ENCODE measurements at regions of chr1 and their contacts with region 1.

Region 1: DNA sequence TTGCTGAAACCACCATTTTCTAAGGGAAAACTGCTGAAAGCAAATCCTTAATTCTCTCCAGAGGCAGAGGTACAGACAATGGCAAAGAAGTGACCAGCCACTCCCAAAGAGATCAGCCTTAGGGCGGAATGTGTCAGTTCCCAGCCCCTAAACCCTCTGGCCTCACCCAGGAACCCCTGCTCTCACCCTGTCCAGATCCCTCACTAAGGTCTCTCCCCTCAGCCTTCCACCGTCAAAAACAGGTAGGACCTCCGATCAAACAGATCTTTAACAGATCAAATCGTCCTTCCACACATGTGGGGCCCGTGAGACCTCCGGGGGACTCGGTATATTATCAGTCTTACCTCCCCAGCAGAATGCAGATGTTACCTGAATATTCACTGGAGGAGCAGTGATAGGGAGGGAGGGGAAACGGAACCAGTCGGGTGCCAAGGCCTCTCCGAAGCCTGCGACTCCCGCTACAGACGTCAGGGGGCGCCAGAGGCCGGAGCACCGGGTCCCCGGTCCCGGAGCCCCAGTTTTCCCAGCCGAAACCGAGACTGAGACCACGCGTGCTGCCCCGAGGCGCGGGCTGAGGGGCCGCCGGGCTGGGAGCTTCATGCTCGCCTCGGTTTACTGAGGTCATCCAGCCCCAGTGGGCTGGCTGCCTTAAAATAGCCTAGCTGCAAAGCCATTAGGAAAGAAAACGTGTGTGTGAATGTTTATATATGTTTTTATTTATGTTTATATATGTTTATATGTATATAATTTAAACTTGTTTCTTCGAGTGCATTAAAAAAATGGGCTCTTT is 23.6 kb downstream of the GPA33 start:
- DNase-seq: peak; percentile 59 to 90 (median 78)
- ATAC-seq: peak; percentile 95
- H3K4me3 ChIP-seq: no peak overlapping the region
- H3K4me3 Mint-ChIP-seq: peak overlapping the region in 4 of 10 donors; percentile 15 to 54 (median 37)
- H3K27ac ChIP-seq: no peak overlapping the region
- H3K27ac Mint-ChIP-seq: peak overlapping the region in 1 of 9 donors; percentile 58
- H3K4me1 ChIP-seq: no peaks in the 10 kb centered on the region
- H3K4me1 Mint-ChIP-seq: peaks cover 0 to 9% (median 5%) of the 10 kb centered on the region in 7 donors
- H3K27me3 ChIP-seq: no peaks in the 10 kb centered on the region
- H3K27me3 Mint-ChIP-seq: no peaks in the 10 kb centered on the region

Region 2: GRCh38 chr1:166947398-166948043 is 119.0 kb before region 1 on chr1:
- CTCF ChIA-PET with region 1: no interaction called
- POLR2A ChIA-PET with region 1: no interaction called
- intact Hi-C with region 1: no loop called
- DNase-seq: no peak
- ATAC-seq: peak; percentile 31
- H3K4me3 ChIP-seq: no peak overlapping the region
- H3K4me3 Mint-ChIP-seq: peak overlapping the region in 7 of 10 donors; percentile 15 to 60 (median 50)
- H3K27ac ChIP-seq: no peak overlapping the region
- H3K27ac Mint-ChIP-seq: no peak overlapping the region
- H3K4me1 ChIP-seq: peaks cover 0 to 16% of the 10 kb centered on the region in 2 donors
- H3K4me1 Mint-ChIP-seq: peaks cover 16 to 41% (median 31%) of the 10 kb centered on the region in 7 donors
- H3K27me3 ChIP-seq: peaks cover 0 to 8% of the 10 kb centered on the region in 2 donors
- H3K27me3 Mint-ChIP-seq: peaks cover 21 to 37% (median 29%) of the 10 kb centered on the region in 5 donors

Region 3: GRCh38 chr1:167090314-167090942 is 23.9 kb after region 1 on chr1 and contains the start of gene GPA33:
- CTCF ChIA-PET with region 1: interaction called, 14 read pairs
- POLR2A ChIA-PET with region 1: interaction called, 9 read pairs
- intact Hi-C with region 1: loop called in 1 of 2 experiments (anchors 1 kb)
- DNase-seq: peak in 7 of 9 donors; percentile 71 to 89 (median 83)
- ATAC-seq: peak; percentile 95
- H3K4me3 ChIP-seq: peak within 1 kb of the TSS; percentile 45
- H3K4me3 Mint-ChIP-seq: peak within 1 kb of the TSS in 9 of 10 donors; percentile 63 to 93 (median 86)
- H3K27ac ChIP-seq: peak within 1 kb of the TSS; percentile 83
- H3K27ac Mint-ChIP-seq: peak within 1 kb of the TSS; percentile 95 to 100 (median 100)
- H3K4me1 ChIP-seq: peaks cover 25 to 33% of the 10 kb centered on the region in 2 donors
- H3K4me1 Mint-ChIP-seq: peaks cover 18 to 80% (median 34%) of the 10 kb centered on the region in 7 donors
- H3K27me3 ChIP-seq: no peaks in the 10 kb centered on the region
- H3K27me3 Mint-ChIP-seq: no peaks in the 10 kb centered on the region
- total RNA-seq, gene GPA33: 5.4 to 32.6 (median 11.3) TPM

Region 4: GRCh38 chr1:167342846-167343245 is 276.3 kb after region 1 on chr1:
- CTCF ChIA-PET with region 1: no interaction called
- POLR2A ChIA-PET with region 1: no interaction called
- intact Hi-C with region 1: loop called in 1 of 2 experiments (anchors 1 kb)
- DNase-seq: peak in 4 of 9 donors; percentile 9 to 27 (median 16)
- ATAC-seq: peak; percentile 52
- H3K4me3 ChIP-seq: no peak overlapping the region
- H3K4me3 Mint-ChIP-seq: no peak overlapping the region
- H3K27ac ChIP-seq: no peak overlapping the region
- H3K27ac Mint-ChIP-seq: peak overlapping the region in 1 of 9 donors; percentile 5
- H3K4me1 ChIP-seq: no peaks in the 10 kb centered on the region
- H3K4me1 Mint-ChIP-seq: peaks cover 4 to 14% (median 9%) of the 10 kb centered on the region in 7 donors
- H3K27me3 ChIP-seq: no peaks in the 10 kb centered on the region
- H3K27me3 Mint-ChIP-seq: no peaks in the 10 kb centered on the region

Region 5: GRCh38 chr1:167416506-167416905 is 350.0 kb after region 1 on chr1:
- CTCF ChIA-PET with region 1: no interaction called
- POLR2A ChIA-PET with region 1: no interaction called
- intact Hi-C with region 1: loop called in 1 of 2 experiments (anchors 5 kb)
- DNase-seq: no peak
- ATAC-seq: no peak
- H3K4me3 ChIP-seq: no peak overlapping the region
- H3K4me3 Mint-ChIP-seq: no peak overlapping the region
- H3K27ac ChIP-seq: no peak overlapping the region
- H3K27ac Mint-ChIP-seq: no peak overlapping the region
- H3K4me1 ChIP-seq: no peaks in the 10 kb centered on the region
- H3K4me1 Mint-ChIP-seq: peaks cover 0 to 23% (median 9%) of the 10 kb centered on the region in 7 donors
- H3K27me3 ChIP-seq: no peaks in the 10 kb centered on the region
- H3K27me3 Mint-ChIP-seq: no peaks in the 10 kb centered on the region

Region 6: DNA sequence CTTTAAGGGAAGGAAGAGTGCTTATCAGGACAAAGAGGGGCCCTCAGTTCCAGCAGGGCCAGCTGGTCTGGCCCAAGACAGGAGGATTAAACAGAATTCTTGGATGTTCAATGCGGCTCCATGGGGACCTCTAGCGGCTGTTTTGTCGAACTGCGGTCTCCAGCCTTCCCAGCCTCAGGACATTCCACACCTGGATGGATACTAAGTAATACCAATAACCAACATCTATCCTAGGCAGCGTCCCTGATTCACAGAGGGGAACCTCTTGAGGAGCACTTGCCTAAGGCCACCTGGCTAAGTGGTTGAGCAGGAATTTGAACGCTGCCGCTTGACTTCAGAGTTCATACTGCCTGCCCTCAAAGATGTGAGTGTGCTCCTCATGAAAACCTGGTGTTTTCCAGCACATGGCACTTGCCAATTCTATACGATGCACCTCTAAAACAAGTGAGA is 467.3 kb after region 1 on chr1:
- CTCF ChIA-PET with region 1: no interaction called
- POLR2A ChIA-PET with region 1: no interaction called
- intact Hi-C with region 1: loop called (anchors 2 kb)
- DNase-seq: peak in 8 of 9 donors; percentile 50 to 72 (median 58)
- ATAC-seq: peak; percentile 87
- H3K4me3 ChIP-seq: no peak overlapping the region
- H3K4me3 Mint-ChIP-seq: no peak overlapping the region
- H3K27ac ChIP-seq: no peak overlapping the region
- H3K27ac Mint-ChIP-seq: peak overlapping the region in 1 of 9 donors; percentile 30
- H3K4me1 ChIP-seq: no peaks in the 10 kb centered on the region
- H3K4me1 Mint-ChIP-seq: peaks cover 0 to 11% (median 2%) of the 10 kb centered on the region in 7 donors
- H3K27me3 ChIP-seq: no peaks in the 10 kb centered on the region
- H3K27me3 Mint-ChIP-seq: peaks cover 0 to 3% (median 0%) of the 10 kb centered on the region in 5 donors

Region 7: DNA sequence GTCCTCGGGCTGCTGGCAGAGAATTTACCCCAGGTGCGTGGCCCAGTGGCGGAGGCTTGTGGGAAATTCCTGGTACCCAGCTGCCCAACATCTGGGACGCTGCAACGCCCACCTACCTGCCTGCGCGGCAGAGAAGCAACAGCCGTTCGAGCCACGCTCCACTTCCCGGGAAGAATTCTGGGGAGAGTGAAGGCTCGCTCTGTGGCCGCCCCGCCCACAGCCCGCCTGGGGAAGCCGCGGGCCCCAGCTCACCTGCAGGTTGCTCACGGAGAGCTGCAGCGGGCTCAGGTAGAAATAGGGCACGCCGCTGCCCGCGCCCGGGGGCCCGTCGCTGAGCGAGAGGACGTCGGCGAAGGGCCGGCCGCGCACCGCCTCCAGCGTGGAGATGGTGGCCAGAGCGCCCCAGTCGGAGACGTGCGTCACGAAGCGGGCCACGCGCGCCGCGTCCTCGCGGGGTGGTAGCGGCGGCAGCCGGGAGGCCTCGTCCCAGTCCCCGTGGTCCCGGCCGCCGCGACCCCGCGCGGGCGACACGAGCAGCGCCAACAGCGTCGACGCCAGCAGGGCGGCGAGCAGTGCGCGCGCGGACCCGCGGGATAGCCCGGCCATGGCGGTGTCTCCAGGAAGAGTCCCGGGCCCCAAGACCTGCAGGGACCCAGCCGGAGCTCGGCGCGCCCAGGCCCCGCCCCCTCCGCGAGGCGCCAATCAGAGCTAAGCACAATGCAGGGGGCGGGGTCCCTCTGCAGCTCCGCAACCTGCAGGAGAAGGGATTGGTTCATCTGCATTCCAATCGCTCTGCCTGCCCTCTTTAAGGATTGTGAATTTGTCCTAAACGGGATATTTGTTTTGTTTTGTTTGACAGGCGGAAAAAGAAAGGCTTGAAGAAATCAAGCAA is 486.9 kb after region 1 on chr1 and contains the start of gene CREG1:
- CTCF ChIA-PET with region 1: no interaction called
- POLR2A ChIA-PET with region 1: no interaction called
- intact Hi-C with region 1: loop called (anchors 1 to 5 kb)
- DNase-seq: peak; percentile 82 to 92 (median 88)
- ATAC-seq: peak; percentile 98
- H3K4me3 ChIP-seq: peak within 1 kb of the TSS; percentile 71
- H3K4me3 Mint-ChIP-seq: peak within 1 kb of the TSS; percentile 85 to 97 (median 92)
- H3K27ac ChIP-seq: peak within 1 kb of the TSS; percentile 72
- H3K27ac Mint-ChIP-seq: peak within 1 kb of the TSS; percentile 43 to 88 (median 80)
- H3K4me1 ChIP-seq: peaks cover 19% of the 10 kb centered on the region in 2 donors
- H3K4me1 Mint-ChIP-seq: peaks cover 35 to 58% (median 46%) of the 10 kb centered on the region in 7 donors
- H3K27me3 ChIP-seq: no peaks in the 10 kb centered on the region
- H3K27me3 Mint-ChIP-seq: peaks cover 0 to 4% (median 0%) of the 10 kb centered on the region in 5 donors
- total RNA-seq, gene CREG1: 10.6 to 33.4 (median 23.1) TPM